ENCODE measurements at regions of chr20 and their contacts with region 1.

Region 1: DNA sequence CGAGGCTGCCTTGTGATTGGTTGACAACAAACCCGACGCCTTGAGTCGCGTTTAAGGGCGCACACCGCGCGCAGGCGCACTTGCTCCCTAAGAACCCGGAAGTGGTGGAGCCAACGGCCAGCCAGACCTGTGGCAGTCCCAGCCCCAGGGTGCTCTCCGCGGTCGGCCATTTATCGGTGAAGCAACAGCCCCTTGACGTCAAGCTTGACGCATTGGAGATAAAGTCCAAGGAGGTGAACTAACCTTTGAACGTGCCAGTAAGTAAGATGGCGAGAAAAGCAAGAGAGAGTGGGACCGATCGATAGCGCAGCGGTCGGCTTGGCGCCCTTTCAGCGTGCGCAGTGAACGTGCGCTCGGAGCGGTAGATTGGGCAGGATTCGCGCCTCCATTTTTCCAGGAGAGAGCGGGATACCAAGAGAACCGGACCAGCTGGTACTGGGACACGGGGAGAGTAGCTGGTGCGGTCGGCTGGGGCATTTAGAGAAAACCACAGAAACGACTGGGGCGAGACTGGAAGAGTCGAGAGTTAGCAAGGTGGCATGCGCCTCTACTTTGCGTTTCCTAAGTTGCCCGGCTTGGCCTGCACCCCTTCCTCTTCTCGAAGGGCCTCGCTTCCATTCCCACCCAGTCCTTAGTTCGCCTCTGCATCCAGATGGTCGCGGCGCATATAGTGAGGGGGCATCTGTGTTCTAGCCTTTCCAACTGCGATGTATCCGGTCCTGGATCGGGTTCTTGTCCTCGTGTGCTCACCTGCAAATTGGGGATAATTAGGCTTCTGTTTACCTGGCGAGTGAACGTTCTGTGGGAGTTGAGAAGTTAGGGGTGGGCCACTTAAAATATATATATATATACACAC is at the start of gene CSTF1:
- DNase-seq: peak; percentile 99
- H3K4me3 ChIP-seq: peak within 1 kb of the TSS; percentile 98
- H3K27ac ChIP-seq: peak within 1 kb of the TSS; percentile 93
- H3K27me3 ChIP-seq: no peaks in the 10 kb centered on the region
- CTCF ChIP-seq: no peak
- polyA plus RNA-seq, gene CSTF1: 70.9 and 74.4 TPM in 2 replicates

Region 2: GRCh38 chr20:56380375-56380774 is 12.1 kb before region 1 on chr20:
- CTCF ChIA-PET with region 1: no interaction called
- POLR2A ChIA-PET with region 1: interaction called, 13 read pairs
- DNase-seq: peak; percentile 27
- H3K4me3 ChIP-seq: no peak overlapping the region
- H3K27ac ChIP-seq: no peak overlapping the region
- H3K27me3 ChIP-seq: no peaks in the 10 kb centered on the region
- CTCF ChIP-seq: no peak

Region 3: GRCh38 chr20:56497326-56497725 is 104.8 kb after region 1 on chr20:
- CTCF ChIA-PET with region 1: no interaction called
- POLR2A ChIA-PET with region 1: no interaction called
- DNase-seq: no peak
- H3K4me3 ChIP-seq: no peak overlapping the region
- H3K27ac ChIP-seq: no peak overlapping the region
- H3K27me3 ChIP-seq: no peaks in the 10 kb centered on the region
- CTCF ChIP-seq: no peak

Measured in AG04450 (cell line).